Caco-2 (cell line): ENCODE measurements at regions of chr3 and their contacts with region 1.

Region 1: DNA sequence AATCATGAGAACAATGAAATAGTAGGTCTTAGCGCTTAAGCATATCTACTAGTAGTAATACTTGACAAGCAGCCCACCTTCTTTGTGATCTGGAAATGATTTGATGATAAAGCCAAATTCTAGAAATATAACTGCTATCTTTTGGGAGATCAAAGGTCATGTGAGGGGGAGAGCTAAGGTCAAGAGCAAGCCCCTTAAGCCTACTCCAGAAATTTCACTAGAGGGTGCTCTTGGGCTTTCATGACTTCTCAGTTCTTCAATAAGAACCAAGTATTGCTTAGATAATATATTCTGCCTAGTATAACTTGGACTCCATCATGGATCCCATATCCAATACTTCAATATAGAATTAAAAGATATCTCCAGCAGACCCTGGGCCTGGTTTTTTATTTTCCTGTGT is 319.6 kb downstream of the ZBTB20 start:
- DNase-seq: peak in 1 of 2 experiments; percentile 47
- H3K4me3 ChIP-seq: no peak overlapping the region
- H3K4me3 Mint-ChIP-seq: no peak overlapping the region
- H3K27ac Mint-ChIP-seq: no peak overlapping the region
- H3K4me1 ChIP-seq: no peaks in the 10 kb centered on the region
- H3K4me1 Mint-ChIP-seq: no peaks in the 10 kb centered on the region
- H3K27me3 ChIP-seq: no peaks in the 10 kb centered on the region
- H3K27me3 Mint-ChIP-seq: no peaks in the 10 kb centered on the region
- CTCF ChIP-seq: peak; percentile 63 to 70

Region 2: GRCh38 chr3:114542359-114542758 is 285.1 kb before region 1 on chr3:
- CTCF ChIA-PET with region 1: no interaction called
- POLR2A ChIA-PET with region 1: no interaction called
- intact Hi-C with region 1: no loop called
- DNase-seq: no peak
- H3K4me3 ChIP-seq: no peak overlapping the region
- H3K4me3 Mint-ChIP-seq: no peak overlapping the region
- H3K27ac Mint-ChIP-seq: no peak overlapping the region
- H3K4me1 ChIP-seq: peaks cover 6% of the 10 kb centered on the region; the same call in 1 of the 2 replicates
- H3K4me1 Mint-ChIP-seq: peaks cover 19% of the 10 kb centered on the region
- H3K27me3 ChIP-seq: no peaks in the 10 kb centered on the region
- H3K27me3 Mint-ChIP-seq: no peaks in the 10 kb centered on the region
- CTCF ChIP-seq: no peak

Region 3: GRCh38 chr3:115040673-115041286 is 213.3 kb after region 1 on chr3:
- CTCF ChIA-PET with region 1: no interaction called
- POLR2A ChIA-PET with region 1: no interaction called
- intact Hi-C with region 1: loop called (anchors 1 kb)
- DNase-seq: peak; percentile 23 to 25
- H3K4me3 ChIP-seq: no peak overlapping the region
- H3K4me3 Mint-ChIP-seq: no peak overlapping the region
- H3K27ac Mint-ChIP-seq: no peak overlapping the region
- H3K4me1 ChIP-seq: no peaks in the 10 kb centered on the region
- H3K4me1 Mint-ChIP-seq: no peaks in the 10 kb centered on the region
- H3K27me3 ChIP-seq: no peaks in the 10 kb centered on the region
- H3K27me3 Mint-ChIP-seq: no peaks in the 10 kb centered on the region
- CTCF ChIP-seq: peak; percentile 54 to 61

Region 4: DNA sequence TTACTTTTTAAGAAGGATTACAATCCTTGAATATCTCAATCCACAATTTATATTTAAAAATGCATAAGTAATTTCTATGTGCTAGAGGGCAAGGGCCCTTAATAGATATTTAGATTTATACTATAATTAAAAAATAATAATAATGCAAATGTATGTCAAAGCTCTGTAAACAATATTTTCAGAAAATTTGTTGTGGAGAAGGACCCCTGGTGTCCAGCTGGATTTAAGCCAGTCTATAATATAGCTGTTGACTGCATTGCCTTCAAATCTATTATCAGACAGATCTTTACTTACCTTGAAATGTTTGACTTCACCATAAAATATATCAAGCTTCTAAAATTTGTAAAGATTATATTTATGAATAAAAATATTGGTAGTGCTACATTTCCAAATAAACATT is 253.9 kb after region 1 on chr3:
- CTCF ChIA-PET with region 1: no interaction called
- POLR2A ChIA-PET with region 1: no interaction called
- intact Hi-C with region 1: loop called (anchors 1 kb)
- DNase-seq: no peak
- H3K4me3 ChIP-seq: no peak overlapping the region
- H3K4me3 Mint-ChIP-seq: no peak overlapping the region
- H3K27ac Mint-ChIP-seq: no peak overlapping the region
- H3K4me1 ChIP-seq: peaks cover 12% of the 10 kb centered on the region
- H3K4me1 Mint-ChIP-seq: no peaks in the 10 kb centered on the region
- H3K27me3 ChIP-seq: no peaks in the 10 kb centered on the region
- H3K27me3 Mint-ChIP-seq: no peaks in the 10 kb centered on the region
- CTCF ChIP-seq: peak in 1 of 2 experiments; percentile 5

Region 5: DNA sequence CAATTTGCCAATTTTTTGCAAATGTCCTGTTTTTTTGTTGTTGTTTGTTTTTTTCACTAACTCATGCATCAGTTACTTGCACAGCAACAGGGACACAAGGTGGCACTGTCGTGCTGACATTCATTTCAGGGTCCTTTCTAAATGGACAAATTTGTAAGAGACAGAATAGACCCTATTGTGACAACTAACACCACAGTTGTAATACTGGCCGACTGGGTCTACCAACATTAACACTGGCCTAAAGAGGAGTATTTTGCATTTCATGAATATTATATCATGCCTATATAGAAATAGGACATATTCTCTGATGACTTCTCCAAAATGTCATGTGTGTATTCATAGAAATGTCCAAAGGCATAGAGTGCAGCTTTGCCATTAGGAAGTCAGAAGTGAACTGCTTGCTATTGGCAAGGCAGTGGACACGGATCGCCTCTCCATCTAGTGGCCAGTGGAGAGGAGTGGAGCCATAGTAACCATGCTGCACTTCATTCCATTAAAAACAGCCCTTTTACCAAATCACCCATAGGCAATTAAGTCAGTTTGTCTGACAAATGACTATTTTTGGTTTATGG is 264.8 kb after region 1 on chr3:
- CTCF ChIA-PET with region 1: interaction called, 3 read pairs
- POLR2A ChIA-PET with region 1: no interaction called
- intact Hi-C with region 1: loop called (anchors 1 kb)
- DNase-seq: peak; percentile 53 to 56
- H3K4me3 ChIP-seq: no peak overlapping the region
- H3K4me3 Mint-ChIP-seq: no peak overlapping the region
- H3K27ac Mint-ChIP-seq: no peak overlapping the region
- H3K4me1 ChIP-seq: no peaks in the 10 kb centered on the region
- H3K4me1 Mint-ChIP-seq: no peaks in the 10 kb centered on the region
- H3K27me3 ChIP-seq: no peaks in the 10 kb centered on the region
- H3K27me3 Mint-ChIP-seq: peaks cover 5% of the 10 kb centered on the region
- CTCF ChIP-seq: peak; percentile 49 to 68

Region 6: GRCh38 chr3:115147329-115148141 is 320.0 kb after region 1 on chr3:
- CTCF ChIA-PET with region 1: no interaction called
- POLR2A ChIA-PET with region 1: no interaction called
- intact Hi-C with region 1: loop called (anchors 2 kb)
- DNase-seq: peak; percentile 95 to 98
- H3K4me3 ChIP-seq: peak overlapping the region; percentile 82
- H3K4me3 Mint-ChIP-seq: peak overlapping the region; percentile 93
- H3K27ac Mint-ChIP-seq: peak overlapping the region; percentile 89
- H3K4me1 ChIP-seq: no peaks in the 10 kb centered on the region
- H3K4me1 Mint-ChIP-seq: no peaks in the 10 kb centered on the region
- H3K27me3 ChIP-seq: no peaks in the 10 kb centered on the region
- H3K27me3 Mint-ChIP-seq: peaks cover 8% of the 10 kb centered on the region
- CTCF ChIP-seq: no peak

Region 7: GRCh38 chr3:115779011-115779410 is 951.5 kb after region 1 on chr3:
- CTCF ChIA-PET with region 1: no interaction called
- POLR2A ChIA-PET with region 1: no interaction called
- intact Hi-C with region 1: no loop called
- DNase-seq: no peak
- H3K4me3 ChIP-seq: no peak overlapping the region
- H3K4me3 Mint-ChIP-seq: no peak overlapping the region
- H3K27ac Mint-ChIP-seq: no peak overlapping the region
- H3K4me1 ChIP-seq: no peaks in the 10 kb centered on the region
- H3K4me1 Mint-ChIP-seq: no peaks in the 10 kb centered on the region
- H3K27me3 ChIP-seq: no peaks in the 10 kb centered on the region
- H3K27me3 Mint-ChIP-seq: peaks cover 3% of the 10 kb centered on the region
- CTCF ChIP-seq: no peak

Region 8: GRCh38 chr3:115819785-115820384 is 992.4 kb after region 1 on chr3:
- CTCF ChIA-PET with region 1: no interaction called
- POLR2A ChIA-PET with region 1: no interaction called
- intact Hi-C with region 1: loop called (anchors 10 kb)
- DNase-seq: peak; percentile 59 to 70
- H3K4me3 ChIP-seq: no peak overlapping the region
- H3K4me3 Mint-ChIP-seq: no peak overlapping the region
- H3K27ac Mint-ChIP-seq: no peak overlapping the region
- H3K4me1 ChIP-seq: no peaks in the 10 kb centered on the region
- H3K4me1 Mint-ChIP-seq: no peaks in the 10 kb centered on the region
- H3K27me3 ChIP-seq: no peaks in the 10 kb centered on the region
- H3K27me3 Mint-ChIP-seq: no peaks in the 10 kb centered on the region
- CTCF ChIP-seq: peak; percentile 93 to 97